Transverse colon (tissue), 4 donors: ENCODE measurements at regions of chr3 and their contacts with region 1.

Region 1: GRCh38 chr3:196502775-196503195 is 783 bp downstream of the RNF168 start:
- DNase-seq: peak; percentile 57
- H3K4me3 ChIP-seq: peak overlapping the region; percentile 69 to 93 (median 86)
- H3K27ac ChIP-seq: peak overlapping the region; percentile 96 to 99 (median 98)
- H3K4me1 ChIP-seq: peaks cover 0 to 39% (median 18%) of the 10 kb centered on the region in 4 donors
- H3K27me3 ChIP-seq: no peaks in the 10 kb centered on the region
- CTCF ChIP-seq: peak in 2 of 5 experiments; percentile 15 to 23
- EP300 ChIP-seq: no peak
- POLR2A ChIP-seq: no peak

Region 2: DNA sequence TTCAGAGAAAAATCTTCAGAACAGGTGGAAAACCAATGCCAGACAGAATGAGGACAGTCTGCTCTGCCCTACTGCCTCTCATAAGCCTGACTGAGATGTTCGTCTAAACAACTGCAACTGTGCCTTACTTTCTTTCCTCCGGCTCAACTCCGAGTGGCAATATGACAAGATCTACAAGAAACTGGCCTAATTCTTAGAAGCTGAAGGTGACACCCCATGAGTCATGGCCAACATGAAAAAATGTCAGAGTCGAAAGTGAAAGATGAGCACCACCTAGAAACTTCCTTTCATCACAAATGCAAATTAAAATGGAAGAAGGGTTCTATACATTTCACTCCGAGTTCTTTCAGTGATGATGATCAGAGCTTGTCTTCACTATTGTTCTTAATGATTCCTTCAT is 228.2 kb before region 1 on chr3:
- in situ Hi-C with region 1: loop called in 2 of 4 experiments (anchors 25 kb)
- intact Hi-C with region 1: no loop called
- DNase-seq: no peak
- H3K4me3 ChIP-seq: no peak overlapping the region
- H3K27ac ChIP-seq: peak overlapping the region in 2 of 4 donors; percentile 4 to 18
- H3K4me1 ChIP-seq: peaks cover 3 to 20% (median 8%) of the 10 kb centered on the region in 4 donors
- H3K27me3 ChIP-seq: no peaks in the 10 kb centered on the region
- CTCF ChIP-seq: no peak
- EP300 ChIP-seq: no peak
- POLR2A ChIP-seq: no peak

Region 3: GRCh38 chr3:196339493-196340254 is 163.1 kb before region 1 on chr3:
- in situ Hi-C with region 1: no loop called
- intact Hi-C with region 1: no loop called
- DNase-seq: no peak
- H3K4me3 ChIP-seq: no peak overlapping the region
- H3K27ac ChIP-seq: no peak overlapping the region
- H3K4me1 ChIP-seq: no peaks in the 10 kb centered on the region
- H3K27me3 ChIP-seq: no peaks in the 10 kb centered on the region
- CTCF ChIP-seq: no peak
- EP300 ChIP-seq: no peak
- POLR2A ChIP-seq: no peak

Region 4: DNA sequence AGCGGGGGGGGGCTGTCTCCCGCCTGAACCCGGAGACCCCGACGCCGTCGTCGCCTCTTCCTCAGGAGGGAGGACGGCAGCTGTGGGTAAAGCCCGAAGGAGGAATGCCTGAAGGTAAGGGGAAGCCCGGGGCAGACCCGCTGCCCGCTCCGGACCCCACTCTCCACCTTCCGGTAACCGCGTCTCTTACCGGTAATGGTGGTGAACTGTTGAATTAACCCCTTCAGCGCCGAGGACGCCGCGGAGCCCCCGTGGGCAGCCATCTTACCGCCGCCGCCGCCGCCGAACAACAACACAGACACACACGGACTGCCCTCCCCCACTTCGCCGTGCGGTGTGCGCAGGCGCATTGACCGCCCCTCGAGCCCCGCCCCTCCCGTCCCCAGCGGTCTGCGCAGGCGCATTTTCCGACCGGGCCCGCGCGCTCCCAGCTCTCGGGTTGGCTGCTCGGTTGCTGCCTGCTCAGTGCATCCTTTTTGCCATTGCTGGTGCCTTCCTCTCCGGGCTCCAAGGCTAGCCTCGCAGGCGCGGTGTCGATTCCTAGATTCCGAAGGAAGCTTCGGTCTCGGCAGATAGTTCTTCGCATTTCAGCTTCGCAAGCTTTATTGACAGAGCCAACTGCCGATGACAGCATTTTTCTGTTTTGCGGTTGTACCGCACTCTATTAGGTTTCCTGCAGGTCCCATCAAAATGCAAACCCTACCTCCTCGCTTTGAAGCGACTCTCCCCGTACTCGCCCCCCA is 70.5 kb before region 1 on chr3 and contains the start of gene UBXN7:
- in situ Hi-C with region 1: no loop called
- intact Hi-C with region 1: loop called (anchors 10 kb)
- DNase-seq: peak; percentile 96
- H3K4me3 ChIP-seq: peak within 1 kb of the TSS; percentile 68 to 99 (median 90)
- H3K27ac ChIP-seq: peak within 1 kb of the TSS; percentile 89 to 96 (median 94)
- H3K4me1 ChIP-seq: peaks cover 8 to 27% (median 9%) of the 10 kb centered on the region in 4 donors
- H3K27me3 ChIP-seq: no peaks in the 10 kb centered on the region
- CTCF ChIP-seq: no peak
- EP300 ChIP-seq: no peak
- POLR2A ChIP-seq: peak; percentile 61
- total RNA-seq, gene UBXN7: 13.8 to 25.4 (median 15.4) TPM

Region 5: GRCh38 chr3:196920733-196921132 is 417.9 kb after region 1 on chr3:
- in situ Hi-C with region 1: no loop called
- intact Hi-C with region 1: no loop called
- DNase-seq: no peak
- H3K4me3 ChIP-seq: no peak overlapping the region
- H3K27ac ChIP-seq: no peak overlapping the region
- H3K4me1 ChIP-seq: no peaks in the 10 kb centered on the region
- H3K27me3 ChIP-seq: no peaks in the 10 kb centered on the region
- CTCF ChIP-seq: no peak
- EP300 ChIP-seq: no peak
- POLR2A ChIP-seq: no peak